Calu3 (cell line): ENCODE measurements at regions of chrX and their contacts with region 1.

Region 1: DNA sequence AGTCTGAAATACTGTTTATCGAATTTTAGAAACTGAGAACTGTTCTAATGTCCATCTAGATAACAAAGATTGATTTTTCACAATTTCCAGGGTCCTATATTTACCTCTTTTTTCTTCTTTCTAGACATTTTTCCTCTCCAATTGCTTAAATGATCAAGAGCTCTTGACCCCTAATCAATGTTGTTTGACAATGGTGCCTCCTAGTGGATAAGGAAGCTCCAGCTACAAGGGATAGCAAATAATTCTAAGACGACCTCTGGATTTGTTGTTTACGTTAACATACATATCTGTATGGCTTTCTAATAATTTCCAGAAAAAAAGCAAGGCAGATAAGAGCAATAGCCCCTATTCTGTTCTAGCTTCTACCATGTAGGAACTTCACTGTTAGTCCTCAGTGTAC is 35.8 kb downstream of the GPR82 start:
- DNase-seq: no peak
- H3K4me3 Mint-ChIP-seq: no peak overlapping the region
- H3K27ac Mint-ChIP-seq: no peak overlapping the region
- H3K4me1 Mint-ChIP-seq: peaks cover 38% of the 10 kb centered on the region
- H3K27me3 Mint-ChIP-seq: no peaks in the 10 kb centered on the region
- CTCF ChIP-seq: peak; percentile 14

Region 2: GRCh38 chrX:41558531-41558930 is 201.3 kb before region 1 on chrX:
- CTCF ChIA-PET with region 1: interaction called, 5 read pairs
- intact Hi-C with region 1: loop called (anchors 2 kb)
- DNase-seq: no peak
- H3K4me3 Mint-ChIP-seq: no peak overlapping the region
- H3K27ac Mint-ChIP-seq: no peak overlapping the region
- H3K4me1 Mint-ChIP-seq: no peaks in the 10 kb centered on the region
- H3K27me3 Mint-ChIP-seq: no peaks in the 10 kb centered on the region
- CTCF ChIP-seq: no peak